Left colon (tissue), 2 donors: ENCODE measurements at regions of chr20 and their contacts with region 1.

Region 1: GRCh38 chr20:62900052-62900691 is 26.1 kb downstream of the DIDO1 start:
- DNase-seq: peak; percentile 75 to 80
- ATAC-seq: peak; percentile 80

Region 2: GRCh38 chr20:62872184-62872847 is 27.9 kb before region 1 on chr20:
- intact Hi-C with region 1: loop called in 1 of 2 experiments (anchors 2 kb)
- DNase-seq: no peak
- ATAC-seq: no peak

Region 3: GRCh38 chr20:63009045-63009961 is 109.1 kb after region 1 on chr20:
- intact Hi-C with region 1: loop called in 1 of 2 experiments (anchors 10 kb)
- DNase-seq: peak; percentile 43 to 83
- ATAC-seq: peak; percentile 89